ENCODE measurements at regions of chr11 and their contacts with region 1.

Region 1: GRCh38 chr11:124961972-124962609 is 8.1 kb downstream of the CCDC15 start:
- DNase-seq: peak; percentile 80
- ATAC-seq: peak; percentile 88
- H3K4me3 ChIP-seq: no peak overlapping the region
- H3K4me3 Mint-ChIP-seq: no peak overlapping the region
- H3K27ac ChIP-seq: no peak overlapping the region
- H3K27ac Mint-ChIP-seq: no peak overlapping the region
- H3K4me1 ChIP-seq: no peaks in the 10 kb centered on the region
- H3K4me1 Mint-ChIP-seq: no peaks in the 10 kb centered on the region
- H3K27me3 ChIP-seq: no peaks in the 10 kb centered on the region
- H3K27me3 Mint-ChIP-seq: no peaks in the 10 kb centered on the region
- CTCF ChIP-seq: peak; percentile 82

Region 2: GRCh38 chr11:125091247-125091876 is 129.3 kb after region 1 on chr11:
- CTCF ChIA-PET with region 1: interaction called, 12 read pairs
- POLR2A ChIA-PET with region 1: no interaction called
- intact Hi-C with region 1: no loop called
- DNase-seq: peak; percentile 29
- ATAC-seq: peak; percentile 28
- H3K4me3 ChIP-seq: no peak overlapping the region
- H3K4me3 Mint-ChIP-seq: no peak overlapping the region
- H3K27ac ChIP-seq: no peak overlapping the region
- H3K27ac Mint-ChIP-seq: no peak overlapping the region
- H3K4me1 ChIP-seq: no peaks in the 10 kb centered on the region
- H3K4me1 Mint-ChIP-seq: no peaks in the 10 kb centered on the region
- H3K27me3 ChIP-seq: no peaks in the 10 kb centered on the region
- H3K27me3 Mint-ChIP-seq: no peaks in the 10 kb centered on the region
- CTCF ChIP-seq: peak; percentile 25

Region 3: GRCh38 chr11:125123947-125124617 is 162.0 kb after region 1 on chr11:
- CTCF ChIA-PET with region 1: interaction called, 19 read pairs
- POLR2A ChIA-PET with region 1: no interaction called
- intact Hi-C with region 1: loop called (anchors 1 kb)
- DNase-seq: peak; percentile 60
- ATAC-seq: peak; percentile 68
- H3K4me3 ChIP-seq: no peak overlapping the region
- H3K4me3 Mint-ChIP-seq: peak overlapping the region; percentile 69
- H3K27ac ChIP-seq: no peak overlapping the region
- H3K27ac Mint-ChIP-seq: no peak overlapping the region
- H3K4me1 ChIP-seq: peaks cover 9 to 12% of the 10 kb centered on the region in 2 donors
- H3K4me1 Mint-ChIP-seq: peaks cover 13% of the 10 kb centered on the region
- H3K27me3 ChIP-seq: peaks cover 0 to 35% (median 7%) of the 10 kb centered on the region in 4 experiments
- H3K27me3 Mint-ChIP-seq: peaks cover 54% of the 10 kb centered on the region
- CTCF ChIP-seq: peak; percentile 55

Region 4: GRCh38 chr11:125141686-125142535 is 179.8 kb after region 1 on chr11:
- CTCF ChIA-PET with region 1: interaction called, 82 read pairs
- POLR2A ChIA-PET with region 1: no interaction called
- intact Hi-C with region 1: loop called (anchors 1 kb)
- DNase-seq: peak; percentile 73
- ATAC-seq: peak; percentile 99
- H3K4me3 ChIP-seq: no peak overlapping the region
- H3K4me3 Mint-ChIP-seq: no peak overlapping the region
- H3K27ac ChIP-seq: no peak overlapping the region
- H3K27ac Mint-ChIP-seq: no peak overlapping the region
- H3K4me1 ChIP-seq: peaks cover 3 to 6% of the 10 kb centered on the region in 2 donors
- H3K4me1 Mint-ChIP-seq: peaks cover 4% of the 10 kb centered on the region
- H3K27me3 ChIP-seq: peaks cover 0 to 15% (median 9%) of the 10 kb centered on the region in 4 experiments
- H3K27me3 Mint-ChIP-seq: peaks cover 54% of the 10 kb centered on the region
- CTCF ChIP-seq: peak; percentile 100

Region 5: DNA sequence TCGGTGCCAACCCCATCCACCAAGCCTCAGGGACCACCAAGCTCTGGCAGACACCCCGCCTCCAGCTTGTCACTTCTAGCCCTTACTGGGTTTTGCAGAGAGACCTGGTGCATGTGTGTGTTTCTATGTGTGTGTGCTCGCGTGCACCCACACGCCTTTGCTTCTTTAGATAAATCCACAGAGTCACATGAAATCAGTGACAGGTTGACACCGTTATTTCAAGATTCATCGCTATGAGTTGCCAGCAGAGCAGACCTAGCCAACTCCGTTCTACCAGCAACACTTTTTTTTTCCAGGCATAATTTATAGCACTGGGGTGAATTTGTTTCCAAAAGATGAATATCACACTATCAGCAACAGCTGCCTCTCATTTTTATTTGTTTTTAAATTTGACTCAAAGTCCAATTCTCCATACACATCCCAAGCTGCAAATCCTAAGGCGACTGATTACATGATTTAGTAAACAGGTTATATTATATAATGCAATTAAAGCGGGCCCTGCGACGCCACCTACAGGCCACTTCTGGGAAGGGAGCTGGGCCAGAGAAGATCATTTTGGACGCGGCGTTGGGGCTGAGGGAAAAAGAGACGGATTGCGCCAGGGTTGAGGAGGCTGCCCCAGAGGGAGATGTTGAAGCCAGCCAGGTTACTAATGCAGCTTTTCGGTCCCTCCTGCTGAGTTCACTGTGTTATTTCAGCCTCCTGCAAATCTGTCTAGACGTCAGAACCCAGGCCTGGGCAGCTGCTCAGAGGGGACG is 383.5 kb after region 1 on chr11:
- CTCF ChIA-PET with region 1: interaction called, 3 read pairs
- POLR2A ChIA-PET with region 1: no interaction called
- intact Hi-C with region 1: loop called (anchors 1 kb)
- DNase-seq: peak; percentile 25
- ATAC-seq: no peak
- H3K4me3 ChIP-seq: no peak overlapping the region
- H3K4me3 Mint-ChIP-seq: no peak overlapping the region
- H3K27ac ChIP-seq: no peak overlapping the region
- H3K27ac Mint-ChIP-seq: no peak overlapping the region
- H3K4me1 ChIP-seq: peaks cover 0 to 4% of the 10 kb centered on the region in 2 donors
- H3K4me1 Mint-ChIP-seq: no peaks in the 10 kb centered on the region
- H3K27me3 ChIP-seq: peaks cover 0 to 7% (median 0%) of the 10 kb centered on the region in 4 experiments
- H3K27me3 Mint-ChIP-seq: peaks cover 17% of the 10 kb centered on the region
- CTCF ChIP-seq: peak; percentile 71

Region 6: GRCh38 chr11:125874556-125875124 is 912.5 kb after region 1 on chr11:
- CTCF ChIA-PET with region 1: no interaction called
- POLR2A ChIA-PET with region 1: no interaction called
- intact Hi-C with region 1: loop called (anchors 2 kb)
- DNase-seq: peak; percentile 63
- ATAC-seq: peak; percentile 49
- H3K4me3 ChIP-seq: no peak overlapping the region
- H3K4me3 Mint-ChIP-seq: no peak overlapping the region
- H3K27ac ChIP-seq: no peak overlapping the region
- H3K27ac Mint-ChIP-seq: no peak overlapping the region
- H3K4me1 ChIP-seq: peaks cover 0 to 3% of the 10 kb centered on the region in 2 donors
- H3K4me1 Mint-ChIP-seq: peaks cover 10% of the 10 kb centered on the region
- H3K27me3 ChIP-seq: no peaks in the 10 kb centered on the region
- H3K27me3 Mint-ChIP-seq: no peaks in the 10 kb centered on the region
- CTCF ChIP-seq: peak; percentile 74

Measured in B cell (primary cell).